ENCODE measurements at regions of chr6 and their contacts with region 1.

Region 1: DNA sequence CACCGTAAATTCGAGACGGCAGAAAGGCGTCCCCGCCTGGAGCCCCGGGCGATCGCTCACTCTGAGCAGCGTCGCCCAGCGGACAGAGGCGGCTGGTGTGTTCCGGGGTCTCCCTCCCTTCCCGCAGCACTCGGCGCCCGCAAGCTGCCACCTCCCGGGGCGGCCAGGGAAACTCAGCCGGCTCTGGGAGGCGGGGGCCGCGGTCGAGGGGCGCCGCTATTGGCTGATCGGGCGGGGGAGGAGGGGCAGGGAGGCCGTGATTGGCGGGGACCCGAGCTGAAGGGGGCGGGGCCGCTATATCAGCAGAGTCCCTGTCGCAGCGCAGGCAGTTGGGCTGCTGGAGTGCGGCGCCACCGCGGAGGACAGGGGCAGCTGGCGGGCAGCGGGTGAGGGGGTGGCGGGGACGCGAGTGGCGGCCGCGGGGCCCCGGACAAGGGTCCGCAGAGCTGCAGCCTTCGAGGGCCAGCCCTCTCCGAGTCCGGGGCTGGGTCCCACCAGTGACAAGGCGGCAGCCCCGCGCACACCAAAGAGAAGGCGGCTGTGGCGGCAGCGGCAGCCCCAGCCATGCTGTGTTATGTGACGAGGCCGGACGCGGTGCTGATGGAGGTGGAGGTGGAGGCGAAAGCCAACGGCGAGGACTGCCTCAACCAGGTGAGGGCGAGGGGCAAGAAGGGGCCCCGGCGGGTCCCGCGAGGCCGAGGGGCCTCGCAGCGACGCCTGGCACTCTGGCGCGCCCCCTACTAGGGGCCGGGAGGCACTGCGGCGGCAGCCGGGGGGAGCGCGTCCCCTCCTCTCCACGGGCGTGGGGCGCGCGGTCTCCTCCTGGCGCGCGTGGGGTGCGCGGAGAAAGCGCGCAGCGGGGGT is at the start of gene MYLIP:
- DNase-seq: peak; percentile 98
- ATAC-seq: peak; percentile 86
- H3K4me3 ChIP-seq: peak within 1 kb of the TSS; percentile 82 to 99 (median 94)
- H3K4me3 Mint-ChIP-seq: peak within 1 kb of the TSS; percentile 96
- H3K27ac ChIP-seq: peak within 1 kb of the TSS; percentile 92 to 95
- H3K27ac Mint-ChIP-seq: peak within 1 kb of the TSS; percentile 94
- H3K4me1 ChIP-seq: peaks cover 28 to 44% of the 10 kb centered on the region in 2 donors
- H3K4me1 Mint-ChIP-seq: peaks cover 50% of the 10 kb centered on the region
- H3K27me3 ChIP-seq: no peaks in the 10 kb centered on the region
- H3K27me3 Mint-ChIP-seq: peaks cover 6% of the 10 kb centered on the region
- CTCF ChIP-seq: peak; percentile 65
- total RNA-seq, gene MYLIP: 37.3 and 40.6 TPM in 2 replicates

Region 2: DNA sequence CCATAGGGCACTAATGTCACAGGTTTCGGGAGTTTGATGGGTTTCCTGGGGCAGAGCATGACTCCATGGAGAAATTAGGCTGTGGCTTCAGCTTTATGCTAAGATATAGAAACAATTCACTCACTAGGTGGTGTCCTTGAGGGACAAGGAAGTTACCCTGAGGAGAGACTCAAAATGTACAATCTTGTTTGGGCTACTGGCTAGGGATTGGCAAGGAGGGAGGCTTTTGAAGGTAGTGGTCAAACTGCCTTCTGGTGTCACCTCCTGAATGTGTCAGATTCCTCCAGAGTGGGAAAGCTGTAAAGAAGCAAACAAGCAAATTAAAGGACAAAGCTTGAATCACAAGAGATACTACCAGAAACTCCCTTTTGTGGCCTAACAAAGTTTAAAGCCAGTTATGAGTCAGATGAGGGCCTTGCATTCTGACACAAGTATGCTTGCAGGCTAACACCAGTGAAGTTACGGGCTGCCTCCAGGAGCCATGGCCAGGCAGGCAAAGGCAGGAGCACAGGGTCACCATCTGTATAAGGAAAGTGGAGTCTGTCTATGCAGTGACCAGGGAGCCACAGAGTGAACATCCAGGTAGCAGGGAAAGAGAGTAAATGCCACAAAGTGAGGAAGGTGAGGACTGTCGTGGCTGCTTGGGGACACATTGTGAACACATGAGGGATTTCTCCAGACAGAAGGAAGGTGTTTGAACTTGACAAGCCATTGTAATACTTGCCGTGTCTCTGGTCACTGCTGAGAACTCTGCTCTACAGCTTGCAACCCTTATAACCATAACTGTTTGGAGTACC is 358.4 kb before region 1 on chr6:
- CTCF ChIA-PET with region 1: interaction called, 14 read pairs
- POLR2A ChIA-PET with region 1: no interaction called
- intact Hi-C with region 1: loop called (anchors 1 kb)
- DNase-seq: peak; percentile 25
- ATAC-seq: no peak
- H3K4me3 ChIP-seq: no peak overlapping the region
- H3K4me3 Mint-ChIP-seq: no peak overlapping the region
- H3K27ac ChIP-seq: no peak overlapping the region
- H3K27ac Mint-ChIP-seq: no peak overlapping the region
- H3K4me1 ChIP-seq: no peaks in the 10 kb centered on the region
- H3K4me1 Mint-ChIP-seq: no peaks in the 10 kb centered on the region
- H3K27me3 ChIP-seq: peaks cover 0 to 4% (median 0%) of the 10 kb centered on the region in 4 experiments
- H3K27me3 Mint-ChIP-seq: peaks cover 10% of the 10 kb centered on the region
- CTCF ChIP-seq: no peak

Region 3: GRCh38 chr6:15901141-15902115 is 227.6 kb before region 1 on chr6:
- CTCF ChIA-PET with region 1: interaction called, 38 read pairs
- POLR2A ChIA-PET with region 1: interaction called, 8 read pairs
- intact Hi-C with region 1: loop called (anchors 1 kb)
- DNase-seq: peak; percentile 93
- ATAC-seq: peak; percentile 80
- H3K4me3 ChIP-seq: peak overlapping the region in 3 of 5 experiments; percentile 19 to 43 (median 42)
- H3K4me3 Mint-ChIP-seq: peak overlapping the region; percentile 85
- H3K27ac ChIP-seq: peak overlapping the region; percentile 84 to 93
- H3K27ac Mint-ChIP-seq: peak overlapping the region; percentile 93
- H3K4me1 ChIP-seq: peaks cover 60 to 61% of the 10 kb centered on the region in 2 donors
- H3K4me1 Mint-ChIP-seq: peaks cover 80% of the 10 kb centered on the region
- H3K27me3 ChIP-seq: no peaks in the 10 kb centered on the region
- H3K27me3 Mint-ChIP-seq: no peaks in the 10 kb centered on the region
- CTCF ChIP-seq: peak; percentile 17

Region 4: DNA sequence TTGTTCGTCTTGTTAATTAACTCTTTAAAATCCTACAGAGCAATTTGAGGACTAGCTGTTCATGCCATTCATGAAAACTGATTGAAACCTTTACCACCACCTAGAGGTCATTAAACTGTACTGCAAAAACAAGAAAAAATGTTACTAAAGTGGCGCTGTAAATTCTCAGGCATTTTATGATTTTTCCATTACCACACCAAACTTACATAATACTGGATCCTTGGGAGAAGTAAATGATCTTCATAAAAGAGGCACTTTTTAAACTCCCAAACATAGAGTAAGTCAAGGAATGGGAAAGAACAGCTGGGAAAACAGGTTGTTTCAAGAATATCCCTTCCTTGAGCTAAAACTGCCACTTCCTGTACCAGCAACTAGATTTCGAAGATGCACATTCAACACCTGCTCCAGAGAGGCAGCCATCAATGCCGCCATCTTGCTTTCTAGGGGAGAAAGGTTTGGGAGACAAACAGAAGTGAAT is 54.2 kb after region 1 on chr6:
- CTCF ChIA-PET with region 1: interaction called, 50 read pairs
- POLR2A ChIA-PET with region 1: no interaction called
- intact Hi-C with region 1: loop called (anchors 2 kb)
- DNase-seq: peak; percentile 59
- ATAC-seq: peak; percentile 66
- H3K4me3 ChIP-seq: no peak overlapping the region
- H3K4me3 Mint-ChIP-seq: no peak overlapping the region
- H3K27ac ChIP-seq: no peak overlapping the region
- H3K27ac Mint-ChIP-seq: no peak overlapping the region
- H3K4me1 ChIP-seq: peaks cover 4 to 11% of the 10 kb centered on the region in 2 donors
- H3K4me1 Mint-ChIP-seq: peaks cover 20% of the 10 kb centered on the region
- H3K27me3 ChIP-seq: peaks cover 0 to 4% (median 0%) of the 10 kb centered on the region in 4 experiments
- H3K27me3 Mint-ChIP-seq: no peaks in the 10 kb centered on the region
- CTCF ChIP-seq: peak; percentile 86